ENCODE measurements at regions of chr9 and their contacts with region 1.

Region 1: DNA sequence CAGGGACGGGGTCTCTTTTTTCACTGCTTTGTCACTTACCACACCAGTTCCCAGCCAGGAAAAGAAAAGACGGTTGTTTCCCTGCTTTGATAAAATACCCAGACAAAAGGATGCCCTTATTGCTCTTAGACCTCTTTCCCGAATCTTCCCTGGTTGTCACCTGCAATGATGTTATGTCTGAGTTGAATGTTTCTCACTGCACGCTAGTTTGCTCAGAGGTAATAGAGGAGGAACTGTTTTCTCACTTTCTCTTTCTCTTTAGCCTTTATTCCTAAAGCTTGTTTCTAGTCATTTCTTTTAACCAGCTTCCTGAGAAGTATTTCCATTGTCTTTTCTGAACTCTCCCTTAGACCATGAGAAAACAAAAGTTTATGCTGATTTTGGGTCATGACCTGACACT is 32.9 kb downstream of the ACER2 start:
- DNase-seq: peak; percentile 73
- H3K4me3 Mint-ChIP-seq: peak overlapping the region; percentile 64
- H3K27ac Mint-ChIP-seq: peak overlapping the region; percentile 27
- H3K4me1 Mint-ChIP-seq: peaks cover 13% of the 10 kb centered on the region
- H3K27me3 Mint-ChIP-seq: no peaks in the 10 kb centered on the region

Region 2: DNA sequence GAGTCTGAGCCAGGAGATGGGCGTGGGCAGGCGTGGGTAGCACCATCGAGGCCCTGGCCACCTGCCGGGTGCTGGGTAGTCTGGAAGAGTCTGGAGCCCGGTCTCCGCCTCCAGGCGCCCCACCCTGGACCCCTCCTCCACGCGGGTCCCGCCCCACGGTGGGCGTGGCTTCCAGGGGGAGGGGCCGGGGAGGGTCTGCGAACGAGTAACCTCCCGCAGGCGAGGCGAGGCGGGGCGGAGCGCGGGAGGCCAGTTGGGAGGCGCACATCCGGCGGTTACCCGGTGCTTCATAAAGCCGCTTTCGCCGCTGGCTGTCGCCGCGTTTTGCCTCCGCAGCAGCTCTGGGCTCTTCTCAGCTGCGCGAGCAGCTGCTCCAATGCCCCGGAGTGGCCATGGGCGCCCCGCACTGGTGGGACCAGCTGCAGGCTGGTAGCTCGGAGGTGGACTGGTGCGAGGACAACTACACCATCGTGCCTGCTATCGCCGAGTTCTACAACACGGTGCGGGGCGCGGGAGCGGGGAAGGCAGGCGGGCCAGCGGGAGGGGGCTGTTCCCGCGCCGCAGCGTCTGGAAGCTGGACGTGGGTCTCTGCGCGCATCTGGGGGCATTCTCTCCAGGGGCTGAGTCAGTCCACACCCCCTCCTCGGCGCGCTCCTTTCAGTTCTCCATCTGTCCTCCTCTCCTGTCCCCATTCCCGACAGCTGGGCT is 32.9 kb before region 1 on chr9 and contains the start of gene ACER2:
- intact Hi-C with region 1: loop called (anchors 2 kb)
- DNase-seq: peak; percentile 99
- H3K4me3 Mint-ChIP-seq: peak within 1 kb of the TSS; percentile 93
- H3K27ac Mint-ChIP-seq: peak within 1 kb of the TSS; percentile 81
- H3K4me1 Mint-ChIP-seq: peaks cover 12% of the 10 kb centered on the region
- H3K27me3 Mint-ChIP-seq: peaks cover 4% of the 10 kb centered on the region
- total RNA-seq, gene ACER2: 0.96 and 1.3 TPM in 2 replicates